Psoas muscle (tissue), 8 donors: ENCODE measurements at regions of chr5 and their contacts with region 1.

Region 1: DNA sequence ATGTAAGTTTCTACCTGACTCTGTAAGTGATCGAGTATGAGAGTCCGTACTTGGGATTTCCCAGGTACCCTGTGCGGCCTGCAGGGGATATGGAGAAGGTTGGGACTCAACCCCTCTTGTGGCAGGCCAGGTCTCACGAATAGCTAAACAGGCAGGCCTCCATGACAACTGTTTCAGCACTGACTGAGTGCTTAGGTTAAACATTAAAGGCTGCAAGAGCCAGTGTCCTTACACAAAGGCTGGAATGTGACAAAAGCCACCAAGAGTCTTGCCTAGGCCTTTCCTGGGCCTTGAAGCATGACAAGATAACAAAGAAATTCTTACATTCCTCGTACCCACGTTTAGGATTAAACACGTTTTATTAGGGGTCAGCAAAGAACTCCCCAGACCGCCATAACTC is 58.6 kb downstream of the THBS4 start:
- DNase-seq: no peak
- ATAC-seq: no peak
- H3K4me3 ChIP-seq: no peak overlapping the region
- H3K27ac ChIP-seq: no peak overlapping the region
- H3K4me1 ChIP-seq: peaks cover 6% of the 10 kb centered on the region
- H3K27me3 ChIP-seq: no peaks in the 10 kb centered on the region
- CTCF ChIP-seq: no peak

Region 2: GRCh38 chr5:79759436-79759835 is 334.4 kb before region 1 on chr5:
- intact Hi-C with region 1: no loop called
- DNase-seq: peak in 1 of 2 donors; percentile 30
- ATAC-seq: peak; percentile 74 to 90 (median 84)
- H3K4me3 ChIP-seq: no peak overlapping the region
- H3K27ac ChIP-seq: peak overlapping the region; percentile 74
- H3K4me1 ChIP-seq: peaks cover 6% of the 10 kb centered on the region
- H3K27me3 ChIP-seq: no peaks in the 10 kb centered on the region
- CTCF ChIP-seq: no peak

Region 3: GRCh38 chr5:80275347-80275746 is 181.6 kb after region 1 on chr5:
- intact Hi-C with region 1: loop called (anchors 2 to 5 kb)
- DNase-seq: no peak
- ATAC-seq: peak in 2 of 4 donors; percentile 64 to 77
- H3K4me3 ChIP-seq: no peak overlapping the region
- H3K27ac ChIP-seq: no peak overlapping the region
- H3K4me1 ChIP-seq: no peaks in the 10 kb centered on the region
- H3K27me3 ChIP-seq: no peaks in the 10 kb centered on the region
- CTCF ChIP-seq: peak; percentile 36

Region 4: GRCh38 chr5:80308526-80308925 is 214.7 kb after region 1 on chr5:
- intact Hi-C with region 1: loop called (anchors 1 to 5 kb)
- DNase-seq: no peak
- ATAC-seq: no peak
- H3K4me3 ChIP-seq: no peak overlapping the region
- H3K27ac ChIP-seq: no peak overlapping the region
- H3K4me1 ChIP-seq: no peaks in the 10 kb centered on the region
- H3K27me3 ChIP-seq: no peaks in the 10 kb centered on the region
- CTCF ChIP-seq: no peak